AG04450 (cell line): ENCODE measurements at regions of chr1 and their contacts with region 1.

Region 1: GRCh38 chr1:160078512-160079195 is 2.7 kb upstream of the KCNJ9 start:
- DNase-seq: no peak
- H3K4me3 ChIP-seq: no peak overlapping the region
- H3K27ac ChIP-seq: no peak overlapping the region
- H3K27me3 ChIP-seq: peaks cover 62% of the 10 kb centered on the region
- CTCF ChIP-seq: peak; percentile 65

Region 2: DNA sequence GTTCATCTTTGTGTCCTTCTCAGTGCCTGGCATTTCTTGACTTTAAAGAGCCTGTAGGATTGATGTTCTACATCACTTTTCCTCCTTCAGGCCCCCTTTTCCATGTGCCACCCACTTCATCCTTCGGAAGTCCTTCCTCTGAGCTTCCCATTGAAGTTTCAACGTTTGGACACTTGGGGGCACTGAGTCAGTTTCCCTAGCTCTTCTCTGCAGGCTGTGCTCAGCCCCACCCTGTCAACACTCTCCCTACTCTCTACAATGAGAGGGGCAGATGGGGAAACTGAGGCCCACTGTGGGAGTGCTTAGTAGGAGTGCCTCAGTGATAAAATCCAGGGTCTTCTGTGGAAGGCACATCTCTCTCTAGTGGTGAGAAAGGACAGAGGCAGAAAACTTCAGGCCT is 20.6 kb before region 1 on chr1:
- CTCF ChIA-PET with region 1: interaction called, 24 read pairs
- POLR2A ChIA-PET with region 1: no interaction called
- DNase-seq: no peak
- H3K4me3 ChIP-seq: no peak overlapping the region
- H3K27ac ChIP-seq: no peak overlapping the region
- H3K27me3 ChIP-seq: peaks cover 50% of the 10 kb centered on the region
- CTCF ChIP-seq: 0 out of 2 replicates have a peak, but pooled peaks have one; percentile 7